ENCODE measurements at regions of chr9 and their contacts with region 1.

Region 1: DNA sequence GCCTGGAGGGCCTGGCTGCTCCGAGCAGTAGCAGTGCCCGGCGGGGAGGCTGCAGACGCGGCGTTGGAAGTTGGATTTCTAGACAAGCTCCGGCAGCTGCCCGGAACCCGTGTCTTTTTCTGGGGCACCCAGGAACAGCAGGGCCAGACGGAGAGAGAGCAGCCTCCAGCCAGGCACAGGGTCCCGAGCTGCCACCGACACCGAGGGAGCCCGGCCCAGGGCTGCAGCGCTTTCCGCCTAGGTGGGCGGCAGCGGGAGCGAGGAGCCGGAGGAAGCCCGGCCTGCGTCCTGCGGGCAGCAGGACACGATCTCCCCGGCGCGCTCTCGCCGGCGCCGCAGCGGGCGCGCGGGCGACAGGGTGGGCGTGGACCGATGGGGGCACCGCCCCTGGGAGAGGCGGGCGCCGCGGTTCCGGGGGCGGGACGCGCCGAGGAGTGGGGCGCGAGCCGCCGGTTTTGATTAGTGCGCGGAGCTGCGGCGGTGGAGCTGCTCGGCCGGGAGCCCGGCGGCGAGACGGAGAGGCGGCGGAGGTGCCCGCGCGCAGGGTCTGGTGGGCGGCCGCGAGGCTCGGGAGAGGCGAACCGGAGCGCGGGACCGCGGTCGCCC is at the start of gene UGCG:
- DNase-seq: peak; percentile 88
- H3K4me3 Mint-ChIP-seq: no peak within 1 kb of the TSS
- H3K27ac Mint-ChIP-seq: no peak within 1 kb of the TSS
- H3K4me1 Mint-ChIP-seq: peaks cover 14% of the 10 kb centered on the region
- H3K27me3 Mint-ChIP-seq: no peaks in the 10 kb centered on the region
- CTCF ChIP-seq: no peak
- total RNA-seq, gene UGCG: 29.5 and 31.4 TPM in 2 replicates

Region 2: GRCh38 chr9:111386386-111386785 is 510.1 kb before region 1 on chr9:
- CTCF ChIA-PET with region 1: no interaction called
- POLR2A ChIA-PET with region 1: no interaction called
- intact Hi-C with region 1: no loop called
- DNase-seq: no peak
- H3K4me3 Mint-ChIP-seq: no peak overlapping the region
- H3K27ac Mint-ChIP-seq: no peak overlapping the region
- H3K4me1 Mint-ChIP-seq: no peaks in the 10 kb centered on the region
- H3K27me3 Mint-ChIP-seq: no peaks in the 10 kb centered on the region
- CTCF ChIP-seq: no peak

Region 3: GRCh38 chr9:111566234-111566633 is 330.2 kb before region 1 on chr9:
- CTCF ChIA-PET with region 1: no interaction called
- POLR2A ChIA-PET with region 1: no interaction called
- intact Hi-C with region 1: no loop called
- DNase-seq: no peak
- H3K4me3 Mint-ChIP-seq: no peak overlapping the region
- H3K27ac Mint-ChIP-seq: no peak overlapping the region
- H3K4me1 Mint-ChIP-seq: no peaks in the 10 kb centered on the region
- H3K27me3 Mint-ChIP-seq: no peaks in the 10 kb centered on the region
- CTCF ChIP-seq: no peak

Region 4: GRCh38 chr9:111597817-111598729 is 298.4 kb before region 1 on chr9:
- CTCF ChIA-PET with region 1: interaction called, 4 read pairs
- POLR2A ChIA-PET with region 1: interaction called, 10 read pairs
- intact Hi-C with region 1: loop called (anchors 5 kb)
- DNase-seq: peak; percentile 74
- H3K4me3 Mint-ChIP-seq: peak overlapping the region; percentile 83
- H3K27ac Mint-ChIP-seq: peak overlapping the region; percentile 75
- H3K4me1 Mint-ChIP-seq: peaks cover 11% of the 10 kb centered on the region
- H3K27me3 Mint-ChIP-seq: no peaks in the 10 kb centered on the region
- CTCF ChIP-seq: peak; percentile 70

Region 5: DNA sequence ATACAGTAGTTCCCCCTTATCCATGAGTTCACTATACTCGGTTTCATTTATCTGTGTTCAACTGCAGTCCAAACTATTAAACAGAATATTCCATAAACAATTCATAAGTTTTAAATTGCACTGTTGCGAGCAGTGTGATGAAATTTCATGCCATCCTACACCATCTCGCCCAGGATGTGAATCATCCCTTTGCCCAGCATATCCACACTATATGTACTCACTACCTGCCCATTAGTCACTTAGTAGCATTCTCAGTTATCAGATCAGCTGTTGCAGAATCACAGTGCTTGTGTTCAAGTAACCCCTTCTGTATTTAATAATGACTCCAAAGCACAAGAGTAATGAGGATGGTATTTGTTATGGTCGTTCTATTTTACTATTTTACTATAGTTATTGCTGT is 153.2 kb before region 1 on chr9:
- CTCF ChIA-PET with region 1: interaction called, 3 read pairs
- POLR2A ChIA-PET with region 1: interaction called, 17 read pairs
- intact Hi-C with region 1: no loop called
- DNase-seq: peak; percentile 94
- H3K4me3 Mint-ChIP-seq: peak overlapping the region; percentile 53
- H3K27ac Mint-ChIP-seq: peak overlapping the region; percentile 99
- H3K4me1 Mint-ChIP-seq: peaks cover 17% of the 10 kb centered on the region
- H3K27me3 Mint-ChIP-seq: no peaks in the 10 kb centered on the region
- CTCF ChIP-seq: no peak

Region 6: GRCh38 chr9:111851566-111851965 is 44.9 kb before region 1 on chr9:
- CTCF ChIA-PET with region 1: interaction called, 3 read pairs
- POLR2A ChIA-PET with region 1: interaction called, 59 read pairs
- intact Hi-C with region 1: loop called (anchors 1 kb)
- DNase-seq: peak; percentile 96
- H3K4me3 Mint-ChIP-seq: no peak overlapping the region
- H3K27ac Mint-ChIP-seq: peak overlapping the region; percentile 60
- H3K4me1 Mint-ChIP-seq: peaks cover 23% of the 10 kb centered on the region
- H3K27me3 Mint-ChIP-seq: no peaks in the 10 kb centered on the region
- CTCF ChIP-seq: no peak

Region 7: GRCh38 chr9:111957856-111958652 is 61.6 kb after region 1 on chr9:
- CTCF ChIA-PET with region 1: no interaction called
- POLR2A ChIA-PET with region 1: interaction called, 69 read pairs
- intact Hi-C with region 1: loop called (anchors 2 kb)
- DNase-seq: peak; percentile 89
- H3K4me3 Mint-ChIP-seq: peak overlapping the region; percentile 68
- H3K27ac Mint-ChIP-seq: peak overlapping the region; percentile 85
- H3K4me1 Mint-ChIP-seq: peaks cover 36% of the 10 kb centered on the region
- H3K27me3 Mint-ChIP-seq: no peaks in the 10 kb centered on the region
- CTCF ChIP-seq: no peak

Region 8: DNA sequence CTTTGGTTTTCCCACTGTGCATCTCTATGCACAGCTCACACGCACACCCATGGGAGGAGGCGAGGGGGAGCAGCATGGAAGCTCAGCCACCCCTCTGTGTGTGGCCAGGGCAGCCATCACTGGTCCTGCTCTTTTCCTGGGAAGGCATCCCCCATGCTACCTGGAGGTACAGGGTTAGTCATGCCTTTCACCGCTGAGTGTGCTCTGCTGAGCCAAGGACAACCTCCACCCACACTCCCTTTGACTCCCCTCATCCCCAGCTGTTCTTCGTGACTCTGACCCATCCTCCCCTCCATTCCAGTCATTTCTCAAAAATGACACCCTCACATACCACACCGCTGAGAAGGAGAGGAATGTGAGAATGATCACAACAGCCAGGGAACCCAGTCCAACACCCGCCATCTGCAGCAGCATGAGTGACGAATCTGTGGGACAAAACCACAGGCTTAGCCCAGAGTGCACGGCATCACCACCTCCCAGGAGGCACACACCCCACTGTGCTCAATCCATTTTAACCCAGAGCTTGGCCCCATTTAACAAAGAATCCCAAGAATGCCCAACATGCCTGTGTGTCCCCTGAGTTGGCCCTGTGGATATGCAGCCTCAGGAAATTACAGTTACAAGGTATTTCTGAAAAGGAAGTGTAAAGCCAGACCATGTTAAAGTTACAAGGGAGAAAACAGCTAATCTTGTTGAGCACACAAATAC is 145.2 kb after region 1 on chr9:
- CTCF ChIA-PET with region 1: no interaction called
- POLR2A ChIA-PET with region 1: interaction called, 12 read pairs
- intact Hi-C with region 1: loop called (anchors 10 kb)
- DNase-seq: peak; percentile 95
- H3K4me3 Mint-ChIP-seq: peak overlapping the region; percentile 24
- H3K27ac Mint-ChIP-seq: peak overlapping the region; percentile 85
- H3K4me1 Mint-ChIP-seq: peaks cover 40% of the 10 kb centered on the region
- H3K27me3 Mint-ChIP-seq: no peaks in the 10 kb centered on the region
- CTCF ChIP-seq: no peak

Region 9: GRCh38 chr9:112333639-112334431 is 437.4 kb after region 1 on chr9:
- CTCF ChIA-PET with region 1: no interaction called
- POLR2A ChIA-PET with region 1: interaction called, 15 read pairs
- intact Hi-C with region 1: no loop called
- DNase-seq: peak; percentile 94
- H3K4me3 Mint-ChIP-seq: peak overlapping the region; percentile 94
- H3K27ac Mint-ChIP-seq: peak overlapping the region; percentile 94
- H3K4me1 Mint-ChIP-seq: peaks cover 13% of the 10 kb centered on the region
- H3K27me3 Mint-ChIP-seq: no peaks in the 10 kb centered on the region
- CTCF ChIP-seq: peak; percentile 35

Measured in MCF 10A (cell line).